ENCODE measurements at regions of chr19 and their contacts with region 1.

Region 1: DNA sequence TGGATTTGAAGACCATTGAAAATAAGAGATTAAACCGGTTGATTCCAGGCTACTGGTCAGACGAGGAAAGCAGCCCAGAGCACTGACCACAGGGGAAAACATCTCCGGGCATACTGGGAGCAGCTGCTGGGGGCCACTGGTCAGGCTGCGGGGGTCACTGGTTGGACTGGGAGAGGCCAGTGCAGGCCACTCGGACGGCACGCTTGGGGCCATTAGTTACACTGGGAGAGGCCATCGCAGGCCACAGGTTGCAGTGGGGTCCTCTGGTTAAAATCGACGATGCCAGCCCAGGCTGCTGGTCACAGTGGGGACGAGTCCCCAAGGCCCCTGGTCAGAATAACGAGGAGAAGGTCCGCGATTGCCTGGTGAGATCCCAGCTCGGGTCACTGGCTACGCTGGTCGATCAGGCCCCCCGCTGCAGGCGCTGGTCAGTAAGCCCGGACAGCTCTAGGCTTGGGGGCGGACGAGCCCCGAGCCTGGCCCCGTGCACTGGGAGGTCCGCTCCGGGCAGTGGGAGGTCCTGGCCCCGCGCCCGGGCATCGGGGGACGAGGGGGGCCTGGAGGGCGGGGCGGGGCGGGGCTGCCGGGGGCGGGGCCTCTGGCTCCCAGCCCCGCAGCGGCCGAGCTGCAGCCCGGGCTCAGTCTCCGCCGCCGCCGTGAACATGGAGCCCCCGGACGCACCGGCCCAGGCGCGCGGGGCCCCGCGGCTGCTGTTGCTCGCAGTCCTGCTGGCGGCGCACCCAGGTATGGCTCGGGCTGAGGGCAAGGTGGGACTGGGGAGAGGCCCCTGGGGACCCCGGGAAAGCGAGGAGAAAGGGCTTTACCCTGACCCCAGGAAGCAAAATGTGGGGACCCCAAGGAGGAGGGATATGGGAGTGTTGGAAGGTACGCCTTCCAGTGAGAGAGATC is at the start of gene BCAM:
- DNase-seq: peak; percentile 65
- ATAC-seq: peak; percentile 79
- H3K4me3 ChIP-seq: peak within 1 kb of the TSS; percentile 65 to 99 (median 94)
- H3K27ac ChIP-seq: peak within 1 kb of the TSS; percentile 87
- H3K4me1 ChIP-seq: peaks cover 64% of the 10 kb centered on the region
- H3K27me3 ChIP-seq: no peaks in the 10 kb centered on the region; a peak in 1 of 5 replicates
- CTCF ChIP-seq: no peak
- EP300 ChIP-seq: no peak; a peak in 1 of 4 replicates
- POLR2A ChIP-seq: peak in 1 of 2 experiments; percentile 94; a peak in 3 of 4 replicates
- RAD21 ChIP-seq: no peak
- total RNA-seq, gene BCAM: 30.6 and 51.2 TPM in 2 replicates

Region 2: GRCh38 chr19:44710483-44710882 is 98.2 kb before region 1 on chr19:
- CTCF ChIA-PET with region 1: no interaction called
- POLR2A ChIA-PET with region 1: no interaction called
- in situ Hi-C with region 1: no loop called
- intact Hi-C with region 1: no loop called
- DNase-seq: no peak
- ATAC-seq: no peak
- H3K4me3 ChIP-seq: no peak overlapping the region
- H3K27ac ChIP-seq: no peak overlapping the region
- H3K4me1 ChIP-seq: peaks cover 22% of the 10 kb centered on the region
- H3K27me3 ChIP-seq: no peaks in the 10 kb centered on the region
- CTCF ChIP-seq: no peak
- EP300 ChIP-seq: no peak
- POLR2A ChIP-seq: no peak
- RAD21 ChIP-seq: no peak

Region 3: DNA sequence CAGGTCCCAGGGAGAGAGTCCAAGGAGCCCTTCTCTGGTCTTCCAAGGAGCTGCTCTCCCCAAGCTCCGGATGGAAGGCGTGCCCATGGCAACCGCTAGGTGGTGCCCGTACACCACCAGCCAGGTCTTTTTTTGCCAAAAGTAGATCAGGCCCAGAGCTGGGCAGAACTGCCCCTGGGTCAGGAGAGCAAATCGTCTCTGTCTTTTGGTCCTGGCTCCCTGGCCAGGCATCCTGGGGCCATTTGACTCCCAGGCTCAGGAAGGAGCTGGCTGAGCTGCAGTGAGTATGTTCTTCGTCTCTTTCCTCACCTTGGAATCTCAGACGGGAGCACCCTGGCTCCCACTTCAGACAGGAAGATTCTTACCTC is 84.8 kb before region 1 on chr19:
- CTCF ChIA-PET with region 1: no interaction called
- POLR2A ChIA-PET with region 1: interaction called, 13 read pairs
- in situ Hi-C with region 1: no loop called
- intact Hi-C with region 1: no loop called
- DNase-seq: peak; percentile 64
- ATAC-seq: peak; percentile 71
- H3K4me3 ChIP-seq: peak overlapping the region in 2 of 3 experiments; percentile 11 to 61; a peak in 2 of 6 replicates
- H3K27ac ChIP-seq: no peak overlapping the region
- H3K4me1 ChIP-seq: peaks cover 90% of the 10 kb centered on the region
- H3K27me3 ChIP-seq: no peaks in the 10 kb centered on the region
- CTCF ChIP-seq: peak; percentile 98
- EP300 ChIP-seq: no peak
- POLR2A ChIP-seq: no peak
- RAD21 ChIP-seq: peak; percentile 98

Region 4: GRCh38 chr19:44770550-44771257 is 38.0 kb before region 1 on chr19:
- CTCF ChIA-PET with region 1: no interaction called
- POLR2A ChIA-PET with region 1: interaction called, 6 read pairs
- in situ Hi-C with region 1: no loop called
- intact Hi-C with region 1: loop called (anchors 5 kb)
- DNase-seq: peak; percentile 89
- ATAC-seq: peak; percentile 98
- H3K4me3 ChIP-seq: no peak overlapping the region
- H3K27ac ChIP-seq: no peak overlapping the region
- H3K4me1 ChIP-seq: peaks cover 46% of the 10 kb centered on the region
- H3K27me3 ChIP-seq: no peaks in the 10 kb centered on the region
- CTCF ChIP-seq: peak; percentile 91
- EP300 ChIP-seq: no peak
- POLR2A ChIP-seq: no peak
- RAD21 ChIP-seq: peak; percentile 95

Region 5: DNA sequence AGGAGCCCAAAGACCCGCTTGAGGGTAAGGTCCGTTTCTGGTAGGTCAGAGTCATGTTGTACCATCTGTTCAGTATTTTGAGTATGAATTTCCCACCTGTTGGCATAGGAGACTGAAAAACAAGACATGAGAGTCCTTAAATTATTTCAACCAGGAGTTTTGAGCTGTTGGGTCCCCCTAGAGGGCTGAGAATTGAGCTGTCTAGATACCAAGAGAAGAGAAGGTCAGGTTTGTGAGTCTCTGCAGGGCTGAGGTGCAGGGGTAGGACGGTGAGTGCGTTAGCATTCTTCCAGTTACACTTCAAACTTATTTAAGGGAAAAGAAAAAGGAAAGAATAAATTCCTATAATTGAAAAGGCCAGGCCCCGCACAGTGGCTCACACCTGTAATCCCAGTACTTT is 26.0 kb before region 1 on chr19:
- CTCF ChIA-PET with region 1: interaction called, 28 read pairs
- POLR2A ChIA-PET with region 1: interaction called, 16 read pairs
- in situ Hi-C with region 1: no loop called
- intact Hi-C with region 1: loop called (anchors 2 kb)
- DNase-seq: no peak
- ATAC-seq: 0 out of 3 replicates have a peak, but pooled peaks have one; percentile 28
- H3K4me3 ChIP-seq: no peak overlapping the region
- H3K27ac ChIP-seq: peak overlapping the region; percentile 17
- H3K4me1 ChIP-seq: peaks cover 23% of the 10 kb centered on the region
- H3K27me3 ChIP-seq: no peaks in the 10 kb centered on the region
- CTCF ChIP-seq: peak; percentile 23
- EP300 ChIP-seq: no peak
- POLR2A ChIP-seq: no peak
- RAD21 ChIP-seq: no peak

Region 6: GRCh38 chr19:44820648-44821609 is 12.2 kb after region 1 on chr19:
- CTCF ChIA-PET with region 1: no interaction called
- POLR2A ChIA-PET with region 1: interaction called, 67 read pairs
- in situ Hi-C with region 1: no loop called
- intact Hi-C with region 1: loop called (anchors 1 kb)
- DNase-seq: no peak
- ATAC-seq: no peak
- H3K4me3 ChIP-seq: no peak overlapping the region
- H3K27ac ChIP-seq: no peak overlapping the region
- H3K4me1 ChIP-seq: peaks cover 49% of the 10 kb centered on the region
- H3K27me3 ChIP-seq: no peaks in the 10 kb centered on the region
- CTCF ChIP-seq: no peak
- EP300 ChIP-seq: no peak
- POLR2A ChIP-seq: no peak
- RAD21 ChIP-seq: no peak

Region 7: DNA sequence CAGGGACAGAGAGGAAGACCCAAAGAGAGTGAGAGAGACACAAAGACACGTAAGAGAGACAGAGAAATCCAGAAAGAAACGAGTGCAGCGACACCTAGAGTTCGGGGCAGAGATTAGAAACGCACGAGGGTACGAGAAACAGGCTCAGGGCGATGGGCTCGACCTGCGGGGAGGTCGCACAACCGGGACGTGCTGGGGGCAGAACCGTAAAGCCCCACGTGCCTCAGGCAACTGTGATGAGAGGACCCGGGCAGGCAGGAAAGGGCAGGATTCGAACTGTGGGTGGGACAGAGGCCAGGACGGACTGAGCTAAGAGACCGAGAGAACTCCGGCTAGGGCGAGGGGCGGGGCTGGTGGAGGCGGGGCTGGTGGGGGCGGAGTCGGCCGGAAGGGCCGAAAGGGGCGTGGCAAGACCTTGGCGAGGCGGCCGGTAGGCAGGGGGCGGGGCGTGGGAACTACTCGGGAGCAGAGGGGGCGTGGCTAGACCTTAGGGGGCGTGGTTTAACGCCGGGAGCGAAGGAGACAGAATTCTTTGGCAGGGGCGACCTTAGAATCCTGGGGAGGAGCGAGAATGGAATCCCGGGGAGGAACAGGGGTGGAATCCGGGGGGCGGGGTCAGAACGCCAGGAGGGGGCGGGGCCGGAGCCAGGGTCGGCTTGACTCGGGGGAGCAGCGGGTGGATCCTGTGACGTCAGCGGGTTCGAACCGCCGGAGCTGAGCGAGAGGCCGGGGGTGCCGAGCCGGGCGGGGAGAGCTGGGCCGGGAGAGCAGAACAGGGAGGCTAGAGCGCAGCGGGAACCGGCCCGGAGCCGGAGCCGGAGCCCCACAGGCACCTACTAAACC is 37.1 kb after region 1 on chr19 and contains the start of gene NECTIN2:
- CTCF ChIA-PET with region 1: interaction called, 4 read pairs
- POLR2A ChIA-PET with region 1: interaction called, 12 read pairs
- in situ Hi-C with region 1: no loop called
- intact Hi-C with region 1: loop called (anchors 1 kb)
- DNase-seq: peak; percentile 95
- ATAC-seq: peak; percentile 61
- H3K4me3 ChIP-seq: peak within 1 kb of the TSS; percentile 76 to 95 (median 84)
- H3K27ac ChIP-seq: peak within 1 kb of the TSS; percentile 95
- H3K4me1 ChIP-seq: peaks cover 48% of the 10 kb centered on the region
- H3K27me3 ChIP-seq: no peaks in the 10 kb centered on the region; a peak in 1 of 5 replicates
- CTCF ChIP-seq: peak; percentile 94
- EP300 ChIP-seq: no peak
- POLR2A ChIP-seq: peak; percentile 62 to 87
- RAD21 ChIP-seq: peak; percentile 30; the same call in 1 of the 2 replicates
- total RNA-seq, gene NECTIN2: 32.7 and 75.4 TPM in 2 replicates

Region 8: DNA sequence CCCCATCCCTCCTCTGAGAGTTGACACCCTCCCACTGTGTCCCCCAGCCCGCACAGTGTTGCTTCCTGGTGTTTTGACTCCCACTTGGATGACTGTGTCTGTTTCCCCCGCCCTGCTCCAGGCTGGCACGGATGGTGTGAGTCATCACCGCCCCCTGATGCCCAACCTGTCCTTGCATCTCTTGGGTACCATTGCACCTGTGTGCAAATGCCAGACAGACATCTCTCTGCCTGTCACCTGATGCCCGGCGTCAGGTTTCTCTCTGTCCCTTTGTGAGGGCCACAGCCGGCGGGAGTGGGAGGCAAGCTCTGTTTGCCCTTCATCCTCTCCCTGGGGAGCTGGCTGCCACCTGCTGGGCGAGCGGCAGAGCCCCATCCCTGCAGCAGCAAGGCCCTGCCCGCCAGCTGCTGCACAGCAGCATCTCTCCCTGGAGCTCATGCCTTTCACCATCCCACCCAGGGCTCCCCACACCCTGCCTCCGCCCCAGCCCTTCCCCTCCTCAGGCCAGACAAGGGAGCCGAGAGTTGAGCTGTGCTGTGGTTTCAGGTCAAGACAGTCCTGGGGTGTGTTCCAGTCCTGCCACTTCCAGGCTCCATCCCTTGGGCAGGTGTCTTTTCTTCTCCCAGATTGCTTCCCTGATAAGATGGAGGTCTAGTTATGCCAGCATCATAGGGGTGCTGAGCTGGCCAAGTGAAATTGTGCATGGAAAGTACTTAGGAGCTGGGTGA is 322.3 kb after region 1 on chr19:
- CTCF ChIA-PET with region 1: no interaction called
- POLR2A ChIA-PET with region 1: no interaction called
- in situ Hi-C with region 1: no loop called
- intact Hi-C with region 1: no loop called
- DNase-seq: peak; percentile 73
- ATAC-seq: peak; percentile 90
- H3K4me3 ChIP-seq: no peak overlapping the region
- H3K27ac ChIP-seq: no peak overlapping the region
- H3K4me1 ChIP-seq: peaks cover 42% of the 10 kb centered on the region
- H3K27me3 ChIP-seq: no peaks in the 10 kb centered on the region
- CTCF ChIP-seq: peak; percentile 89
- EP300 ChIP-seq: no peak
- POLR2A ChIP-seq: no peak
- RAD21 ChIP-seq: peak; percentile 83